Activated CD4-positive, alpha-beta T cell treated with anti-CD3 and anti-CD28 coated beads, Interleukin-2, amount 10 ng/mL, durations not matched to agents 24 days and 14 days (primary cell): ENCODE measurements at regions of chr7 and their contacts with region 1.

Region 1: GRCh38 chr7:95330204-95330960 is 6.0 kb upstream of the PON1 start:
- DNase-seq: peak; percentile 68
- H3K4me3 Mint-ChIP-seq: peak overlapping the region; percentile 67
- H3K27ac Mint-ChIP-seq: peak overlapping the region; percentile 6
- H3K4me1 Mint-ChIP-seq: peaks cover 11% of the 10 kb centered on the region
- H3K27me3 Mint-ChIP-seq: peaks cover 11% of the 10 kb centered on the region

Region 2: GRCh38 chr7:95434557-95435421 is 104.4 kb after region 1 on chr7 and contains the start of gene PON2:
- intact Hi-C with region 1: loop called (anchors 5 kb)
- DNase-seq: peak; percentile 85
- H3K4me3 Mint-ChIP-seq: peak within 1 kb of the TSS; percentile 87
- H3K27ac Mint-ChIP-seq: peak within 1 kb of the TSS; percentile 58
- H3K4me1 Mint-ChIP-seq: peaks cover 11% of the 10 kb centered on the region
- H3K27me3 Mint-ChIP-seq: peaks cover 9% of the 10 kb centered on the region
- total RNA-seq, gene PON2: 2.4 and 3.7 TPM in 2 replicates